Dendritic cell treated with granulocyte-macrophage colony-stimulating factor and Interleukin-4, amounts not matched to agents 40 ng/mL and 50 ng/mL, for 4 days (primary cell): ENCODE measurements at regions of chr5 and their contacts with region 1.

Region 1: GRCh38 chr5:112529525-112529924 is 110.4 kb upstream of the EPB41L4A start:
- H3K4me3 Mint-ChIP-seq: no peak overlapping the region
- H3K27ac Mint-ChIP-seq: no peak overlapping the region
- H3K4me1 Mint-ChIP-seq: peaks cover 55% of the 10 kb centered on the region
- H3K27me3 Mint-ChIP-seq: no peaks in the 10 kb centered on the region

Region 2: GRCh38 chr5:111512375-111513130 is 1017.0 kb before region 1 on chr5 and contains the start of gene STARD4:
- intact Hi-C with region 1: loop called (anchors 5 kb)
- H3K4me3 Mint-ChIP-seq: peak within 1 kb of the TSS; percentile 97
- H3K27ac Mint-ChIP-seq: peak within 1 kb of the TSS; percentile 96
- H3K4me1 Mint-ChIP-seq: peaks cover 31% of the 10 kb centered on the region
- H3K27me3 Mint-ChIP-seq: no peaks in the 10 kb centered on the region

Region 3: DNA sequence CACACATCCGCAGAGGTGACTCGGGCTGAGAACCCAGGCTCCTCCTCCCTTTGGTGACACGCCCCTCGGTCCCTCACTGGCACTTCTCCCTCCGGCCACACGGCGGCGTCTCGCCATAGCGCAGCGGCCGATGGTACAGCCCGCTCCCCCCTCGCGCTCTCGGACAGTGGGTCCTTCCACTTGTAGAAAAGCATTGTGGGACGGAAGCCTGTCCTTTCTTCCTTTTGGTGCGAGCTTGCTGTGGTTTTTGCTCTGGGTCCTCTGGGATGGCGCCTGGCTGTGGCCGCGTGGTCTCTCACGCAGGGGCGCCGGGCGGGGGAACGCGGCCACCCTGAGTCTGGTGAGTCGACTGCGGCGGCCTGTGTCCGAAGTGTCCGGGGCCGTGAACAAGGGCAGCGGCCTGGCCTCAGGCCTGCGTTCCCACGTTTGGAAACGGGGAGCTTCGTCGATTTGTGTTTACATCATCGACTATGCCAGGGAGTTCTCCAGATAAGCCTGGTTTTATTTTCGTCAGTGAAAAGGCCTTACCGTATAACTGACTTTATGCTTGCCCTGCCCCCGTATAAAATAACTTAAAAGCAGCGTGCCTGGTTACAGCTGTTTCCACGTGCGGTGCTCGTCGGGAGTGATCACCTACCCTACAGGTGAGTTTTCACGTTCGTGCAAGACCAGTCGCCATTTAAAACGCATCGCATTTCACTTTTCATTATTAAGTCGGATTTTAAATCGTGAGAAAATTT is 368.7 kb before region 1 on chr5:
- intact Hi-C with region 1: loop called (anchors 5 kb)
- H3K4me3 Mint-ChIP-seq: peak overlapping the region; percentile 94
- H3K27ac Mint-ChIP-seq: peak overlapping the region; percentile 90
- H3K4me1 Mint-ChIP-seq: peaks cover 24% of the 10 kb centered on the region
- H3K27me3 Mint-ChIP-seq: peaks cover 2% of the 10 kb centered on the region